ENCODE measurements at regions of chr22 and their contacts with region 1.

Region 1: DNA sequence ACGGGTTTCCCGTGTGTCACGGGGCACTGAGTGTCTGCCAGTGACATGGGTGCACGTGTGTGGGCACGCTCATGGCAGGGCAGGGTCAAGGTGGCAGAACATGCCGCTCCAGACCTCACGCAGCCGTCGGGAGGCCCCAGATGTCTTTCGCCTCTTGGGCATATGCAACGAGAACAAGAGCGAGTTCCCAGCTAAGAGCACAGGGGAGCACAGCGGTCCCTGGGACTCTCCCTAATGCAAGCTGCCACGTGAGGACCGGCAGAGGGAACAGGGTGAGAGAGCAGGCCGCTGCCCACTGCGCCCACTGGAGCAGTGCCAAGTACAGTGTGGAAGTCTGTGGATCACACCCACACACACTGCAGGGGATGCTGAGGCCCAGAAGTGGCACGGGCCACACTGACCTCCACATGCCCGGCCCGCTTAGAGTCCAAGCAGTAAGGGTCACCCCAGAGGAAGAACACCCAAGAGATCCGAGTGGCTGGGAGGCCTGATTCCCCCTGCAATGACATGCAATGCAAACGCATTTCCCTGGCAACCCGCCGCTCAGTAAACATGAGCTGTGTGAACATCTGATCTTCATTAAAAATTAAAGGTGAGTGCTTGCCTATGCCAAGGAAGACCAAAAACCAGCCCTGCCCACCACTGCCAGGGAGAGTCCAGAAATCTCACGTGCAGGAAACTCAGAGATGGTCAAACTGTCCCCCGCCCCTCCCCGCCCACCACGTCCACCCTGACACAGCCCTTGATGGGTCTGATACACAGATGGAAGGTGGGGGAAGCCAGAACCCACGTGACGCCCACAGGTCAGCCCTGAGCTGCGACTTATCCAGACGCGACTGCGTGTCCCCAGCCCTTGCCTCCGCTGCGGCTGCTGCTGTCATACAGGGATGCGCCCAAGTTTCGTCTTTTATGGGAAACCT is 11.7 kb downstream of the CERK start:
- DNase-seq: no peak
- ATAC-seq: peak; percentile 33 to 48

Region 2: DNA sequence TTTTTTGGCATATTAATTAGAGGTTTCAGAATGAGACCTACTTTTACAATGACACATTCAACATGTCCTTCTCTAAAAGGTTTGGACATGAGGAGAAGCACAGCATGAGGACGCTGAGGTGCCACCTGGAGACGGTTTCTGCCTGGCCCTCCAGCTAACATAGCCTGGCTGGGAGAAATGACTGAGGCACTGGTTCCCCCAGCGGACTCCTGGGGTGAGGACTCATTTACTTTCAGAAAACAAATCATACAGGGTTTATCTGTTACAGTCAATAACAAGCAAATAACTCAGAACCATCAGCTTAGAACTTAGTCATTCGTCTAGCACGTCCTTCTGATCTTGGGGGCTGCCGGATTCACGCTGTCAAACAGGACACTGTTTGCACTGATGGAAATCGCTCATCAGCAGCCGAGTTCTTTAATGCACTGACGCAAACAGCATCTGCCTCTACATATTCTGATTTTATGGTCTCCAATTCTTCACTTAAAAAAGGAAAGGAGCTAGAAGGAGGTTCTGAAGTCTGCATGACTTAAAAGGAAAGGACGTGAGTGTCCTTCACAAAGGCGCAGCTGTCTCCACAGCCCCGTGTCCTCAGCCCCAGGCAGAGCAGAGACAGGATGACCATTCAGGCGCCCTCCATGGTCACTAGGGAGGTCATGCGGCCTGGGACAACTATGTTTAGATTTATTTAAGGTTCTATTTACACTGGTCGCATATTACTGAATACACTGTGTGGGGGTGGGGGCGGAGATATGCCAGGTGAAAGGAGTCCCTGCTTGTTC is 32.5 kb before region 1 on chr22:
- intact Hi-C with region 1: loop called in 1 of 2 experiments (anchors 5 kb)
- DNase-seq: no peak
- ATAC-seq: no peak